B cell (primary cell): ENCODE measurements at regions of chr5 and their contacts with region 1.

Region 1: GRCh38 chr5:35212122-35212982 is 17.9 kb downstream of the PRLR start:
- DNase-seq: peak; percentile 38
- ATAC-seq: peak; percentile 73
- H3K4me3 ChIP-seq: no peak overlapping the region
- H3K4me3 Mint-ChIP-seq: peak overlapping the region; percentile 33
- H3K27ac ChIP-seq: peak overlapping the region in 1 of 2 donors; percentile 48
- H3K27ac Mint-ChIP-seq: peak overlapping the region; percentile 76
- H3K4me1 ChIP-seq: peaks cover 6 to 12% of the 10 kb centered on the region in 2 donors
- H3K4me1 Mint-ChIP-seq: peaks cover 20% of the 10 kb centered on the region
- H3K27me3 ChIP-seq: no peaks in the 10 kb centered on the region
- H3K27me3 Mint-ChIP-seq: peaks cover 6% of the 10 kb centered on the region
- CTCF ChIP-seq: no peak

Region 2: GRCh38 chr5:35151146-35151920 is 61.0 kb before region 1 on chr5:
- CTCF ChIA-PET with region 1: no interaction called
- POLR2A ChIA-PET with region 1: no interaction called
- intact Hi-C with region 1: no loop called
- DNase-seq: no peak
- ATAC-seq: no peak
- H3K4me3 ChIP-seq: no peak overlapping the region
- H3K4me3 Mint-ChIP-seq: no peak overlapping the region
- H3K27ac ChIP-seq: no peak overlapping the region
- H3K27ac Mint-ChIP-seq: no peak overlapping the region
- H3K4me1 ChIP-seq: peaks cover 5 to 7% of the 10 kb centered on the region in 2 donors
- H3K4me1 Mint-ChIP-seq: peaks cover 6% of the 10 kb centered on the region
- H3K27me3 ChIP-seq: no peaks in the 10 kb centered on the region
- H3K27me3 Mint-ChIP-seq: peaks cover 20% of the 10 kb centered on the region
- CTCF ChIP-seq: no peak

Region 3: GRCh38 chr5:35194635-35195471 is 17.5 kb before region 1 on chr5:
- CTCF ChIA-PET with region 1: interaction called, 5 read pairs
- POLR2A ChIA-PET with region 1: no interaction called
- intact Hi-C with region 1: loop called (anchors 2 kb)
- DNase-seq: peak; percentile 70
- ATAC-seq: peak; percentile 89
- H3K4me3 ChIP-seq: peak overlapping the region in 3 of 5 experiments; percentile 8 to 31 (median 21)
- H3K4me3 Mint-ChIP-seq: peak overlapping the region; percentile 75
- H3K27ac ChIP-seq: peak overlapping the region; percentile 54 to 69
- H3K27ac Mint-ChIP-seq: peak overlapping the region; percentile 81
- H3K4me1 ChIP-seq: peaks cover 28% of the 10 kb centered on the region in 2 donors
- H3K4me1 Mint-ChIP-seq: peaks cover 35% of the 10 kb centered on the region
- H3K27me3 ChIP-seq: no peaks in the 10 kb centered on the region
- H3K27me3 Mint-ChIP-seq: no peaks in the 10 kb centered on the region
- CTCF ChIP-seq: no peak

Region 4: GRCh38 chr5:35230038-35230631 is 17.8 kb after region 1 on chr5 and contains the start of gene PRLR:
- CTCF ChIA-PET with region 1: no interaction called
- POLR2A ChIA-PET with region 1: no interaction called
- intact Hi-C with region 1: no loop called
- DNase-seq: peak; percentile 13
- ATAC-seq: no peak
- H3K4me3 ChIP-seq: peak within 1 kb of the TSS in 4 of 5 experiments; percentile 13 to 49 (median 32)
- H3K4me3 Mint-ChIP-seq: peak within 1 kb of the TSS; percentile 81
- H3K27ac ChIP-seq: no peak within 1 kb of the TSS
- H3K27ac Mint-ChIP-seq: peak within 1 kb of the TSS; percentile 10
- H3K4me1 ChIP-seq: peaks cover 9 to 13% of the 10 kb centered on the region in 2 donors
- H3K4me1 Mint-ChIP-seq: peaks cover 13% of the 10 kb centered on the region
- H3K27me3 ChIP-seq: peaks cover 0 to 34% (median 29%) of the 10 kb centered on the region in 4 experiments
- H3K27me3 Mint-ChIP-seq: peaks cover 57% of the 10 kb centered on the region
- CTCF ChIP-seq: no peak
- total RNA-seq, gene PRLR: 0.39 and 0.51 TPM in 2 replicates

Region 5: DNA sequence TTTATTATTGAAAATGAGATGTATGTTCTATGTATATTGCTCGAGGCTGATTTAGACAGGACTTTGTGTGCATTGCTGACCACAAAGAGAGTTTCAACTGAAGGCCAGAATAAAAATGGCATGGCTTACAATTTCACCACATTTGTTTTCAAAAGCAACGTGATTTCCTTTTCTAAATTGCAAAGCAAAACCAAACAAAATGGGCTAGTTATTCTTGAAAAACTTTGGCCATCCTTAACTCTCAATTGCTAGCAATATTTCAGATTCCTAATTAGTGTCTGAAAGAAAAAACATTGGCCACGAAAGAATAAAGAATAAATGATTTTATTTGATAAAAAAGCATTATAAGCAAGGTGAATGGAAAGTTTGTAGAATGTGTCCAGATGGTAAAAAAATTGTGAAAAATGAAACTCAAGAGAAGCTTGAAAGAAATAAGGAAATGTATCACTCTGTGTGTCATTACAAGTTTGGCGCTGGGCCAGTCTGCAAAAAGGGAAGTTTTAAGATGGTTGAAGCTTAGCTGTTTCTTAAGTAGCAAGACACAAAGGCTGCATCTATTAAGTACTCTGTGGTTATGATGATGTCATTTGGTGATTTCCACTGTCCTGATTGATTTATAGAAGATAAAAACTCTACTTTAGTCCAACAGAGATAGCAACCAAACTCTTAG is 107.1 kb after region 1 on chr5:
- CTCF ChIA-PET with region 1: no interaction called
- POLR2A ChIA-PET with region 1: no interaction called
- intact Hi-C with region 1: loop called (anchors 5 kb)
- DNase-seq: peak; percentile 63
- ATAC-seq: peak; percentile 89
- H3K4me3 ChIP-seq: no peak overlapping the region
- H3K4me3 Mint-ChIP-seq: peak overlapping the region; percentile 29
- H3K27ac ChIP-seq: peak overlapping the region; percentile 47 to 57
- H3K27ac Mint-ChIP-seq: peak overlapping the region; percentile 90
- H3K4me1 ChIP-seq: no peaks in the 10 kb centered on the region
- H3K4me1 Mint-ChIP-seq: peaks cover 14% of the 10 kb centered on the region
- H3K27me3 ChIP-seq: no peaks in the 10 kb centered on the region
- H3K27me3 Mint-ChIP-seq: no peaks in the 10 kb centered on the region
- CTCF ChIP-seq: no peak